ENCODE measurements at regions of chr3 and their contacts with region 1.

Region 1: DNA sequence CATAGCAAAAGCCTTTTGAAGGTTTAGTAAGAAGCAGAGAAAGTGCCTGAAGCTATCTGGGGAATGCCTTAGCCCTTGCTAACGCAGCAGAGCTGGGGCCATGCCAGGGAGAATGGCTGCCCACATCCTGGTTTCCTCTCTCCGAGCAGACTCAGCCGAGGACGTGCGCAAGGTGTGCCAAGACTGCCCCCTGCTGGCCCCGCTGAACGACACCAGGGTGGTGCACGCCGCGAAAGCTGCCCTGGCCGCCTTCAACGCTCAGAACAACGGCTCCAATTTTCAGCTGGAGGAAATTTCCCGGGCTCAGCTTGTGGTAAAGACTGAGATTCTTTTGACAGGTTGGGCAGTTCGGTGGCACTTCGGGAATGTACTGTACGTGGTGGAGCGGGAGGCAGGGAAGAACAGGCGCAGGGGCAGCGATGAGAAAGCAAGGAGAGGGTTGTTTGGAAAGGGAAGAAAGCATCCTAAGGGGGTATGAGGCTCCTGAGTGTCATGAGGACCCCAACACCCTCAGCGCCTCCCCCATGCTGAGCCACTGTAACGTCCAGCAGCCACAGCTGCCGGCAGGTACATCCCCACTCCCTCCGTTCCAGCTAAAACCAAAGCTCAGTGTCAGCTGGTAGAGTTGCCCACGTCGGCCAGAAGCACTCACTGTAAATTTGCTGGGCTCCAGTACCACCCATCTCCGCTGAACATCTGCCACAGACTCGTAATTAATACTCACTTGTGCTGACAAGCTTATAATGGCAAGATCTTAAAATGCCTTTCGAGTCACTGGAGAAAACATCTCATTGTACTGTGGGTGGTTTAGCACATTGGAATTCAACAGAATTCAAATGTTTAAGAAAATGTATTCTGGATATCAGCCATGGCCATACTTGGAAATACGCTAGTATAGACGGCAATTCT is 4.4 kb downstream of the AHSG start:
- DNase-seq: peak; percentile 75 to 86
- ATAC-seq: peak; percentile 90 to 95 (median 92)
- H3K4me3 ChIP-seq: peak overlapping the region; percentile 12
- H3K27ac ChIP-seq: no peak overlapping the region
- H3K4me1 ChIP-seq: no peaks in the 10 kb centered on the region
- H3K27me3 ChIP-seq: peaks cover 0 to 29% (median 0%) of the 10 kb centered on the region in 3 donors
- CTCF ChIP-seq: peak; percentile 70

Region 2: DNA sequence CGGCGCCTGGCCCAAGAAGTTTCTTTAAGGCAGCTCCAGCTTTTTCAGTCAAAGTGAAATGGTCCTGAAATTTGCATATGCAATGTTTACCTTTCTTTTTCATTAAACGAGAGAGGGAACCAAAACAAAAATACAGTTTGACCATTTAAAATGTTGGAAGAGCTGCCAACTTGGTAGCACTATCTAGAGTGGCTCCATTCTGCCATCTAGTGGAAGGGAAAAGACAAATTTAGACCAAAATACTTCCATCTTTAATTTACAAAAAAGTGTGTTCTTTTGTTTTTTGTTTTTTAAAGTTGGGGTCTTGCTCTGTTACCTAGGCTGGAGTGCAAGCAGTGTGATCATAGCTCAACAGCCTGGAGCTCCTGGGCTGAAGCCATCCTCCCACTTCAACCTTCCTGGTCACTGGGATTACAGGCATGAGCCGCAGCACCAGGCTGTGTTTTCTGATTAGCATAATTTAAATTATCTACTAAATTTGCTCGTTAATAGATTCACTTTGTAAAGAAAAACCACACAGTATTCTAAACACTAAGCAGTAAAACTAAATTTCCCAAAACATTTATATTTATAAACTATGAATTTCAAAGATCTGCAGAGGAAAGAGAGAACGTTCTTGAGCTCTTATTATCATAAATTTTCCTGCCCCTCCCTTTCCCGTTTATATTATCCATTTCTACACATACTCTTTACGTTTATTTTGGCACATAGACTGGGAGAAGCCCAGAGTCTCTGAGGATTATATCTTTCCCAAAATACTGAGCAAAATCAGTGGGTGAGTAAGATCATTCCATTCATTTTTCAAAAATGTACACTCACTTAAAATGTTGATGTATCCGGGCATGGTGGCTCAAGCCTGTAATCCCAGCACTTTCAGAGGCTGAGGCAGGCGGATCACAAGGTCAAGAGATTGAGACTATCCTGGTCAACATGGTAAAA is 204.4 kb after region 1 on chr3:
- intact Hi-C with region 1: loop called (anchors 2 to 5 kb)
- DNase-seq: no peak
- ATAC-seq: peak in 2 of 4 donors; percentile 42 to 63
- H3K4me3 ChIP-seq: no peak overlapping the region
- H3K27ac ChIP-seq: no peak overlapping the region
- H3K4me1 ChIP-seq: no peaks in the 10 kb centered on the region
- H3K27me3 ChIP-seq: peaks cover 0 to 28% (median 13%) of the 10 kb centered on the region in 3 donors
- CTCF ChIP-seq: peak; percentile 70

Region 3: GRCh38 chr3:186930641-186931531 is 313.6 kb after region 1 on chr3:
- intact Hi-C with region 1: no loop called
- DNase-seq: peak; percentile 62 to 82
- ATAC-seq: peak; percentile 79 to 86 (median 85)
- H3K4me3 ChIP-seq: peak overlapping the region; percentile 99
- H3K27ac ChIP-seq: peak overlapping the region; percentile 89
- H3K4me1 ChIP-seq: peaks cover 27% of the 10 kb centered on the region
- H3K27me3 ChIP-seq: no peaks in the 10 kb centered on the region
- CTCF ChIP-seq: peak; percentile 14

Measured in psoas muscle (tissue), 8 donors.